ENCODE measurements at regions of chr18 and their contacts with region 1.

Region 1: GRCh38 chr18:74040459-74041332 is 106.9 kb downstream of the FBXO15 start:
- DNase-seq: peak; percentile 37 to 87 (median 66)
- ATAC-seq: peak; percentile 85 to 96 (median 94)
- H3K4me3 ChIP-seq: no peak overlapping the region
- H3K27ac ChIP-seq: no peak overlapping the region
- H3K4me1 ChIP-seq: no peaks in the 10 kb centered on the region
- H3K27me3 ChIP-seq: no peaks in the 10 kb centered on the region
- CTCF ChIP-seq: peak; percentile 45 to 60 (median 55)

Region 2: GRCh38 chr18:73791081-73791480 is 249.6 kb before region 1 on chr18:
- intact Hi-C with region 1: no loop called
- DNase-seq: no peak
- ATAC-seq: no peak
- H3K4me3 ChIP-seq: no peak overlapping the region
- H3K27ac ChIP-seq: no peak overlapping the region
- H3K4me1 ChIP-seq: no peaks in the 10 kb centered on the region
- H3K27me3 ChIP-seq: no peaks in the 10 kb centered on the region
- CTCF ChIP-seq: no peak

Region 3: GRCh38 chr18:73990258-73990657 is 50.4 kb before region 1 on chr18:
- intact Hi-C with region 1: no loop called
- DNase-seq: no peak
- ATAC-seq: no peak
- H3K4me3 ChIP-seq: no peak overlapping the region
- H3K27ac ChIP-seq: no peak overlapping the region
- H3K4me1 ChIP-seq: no peaks in the 10 kb centered on the region
- H3K27me3 ChIP-seq: no peaks in the 10 kb centered on the region
- CTCF ChIP-seq: no peak

Region 4: DNA sequence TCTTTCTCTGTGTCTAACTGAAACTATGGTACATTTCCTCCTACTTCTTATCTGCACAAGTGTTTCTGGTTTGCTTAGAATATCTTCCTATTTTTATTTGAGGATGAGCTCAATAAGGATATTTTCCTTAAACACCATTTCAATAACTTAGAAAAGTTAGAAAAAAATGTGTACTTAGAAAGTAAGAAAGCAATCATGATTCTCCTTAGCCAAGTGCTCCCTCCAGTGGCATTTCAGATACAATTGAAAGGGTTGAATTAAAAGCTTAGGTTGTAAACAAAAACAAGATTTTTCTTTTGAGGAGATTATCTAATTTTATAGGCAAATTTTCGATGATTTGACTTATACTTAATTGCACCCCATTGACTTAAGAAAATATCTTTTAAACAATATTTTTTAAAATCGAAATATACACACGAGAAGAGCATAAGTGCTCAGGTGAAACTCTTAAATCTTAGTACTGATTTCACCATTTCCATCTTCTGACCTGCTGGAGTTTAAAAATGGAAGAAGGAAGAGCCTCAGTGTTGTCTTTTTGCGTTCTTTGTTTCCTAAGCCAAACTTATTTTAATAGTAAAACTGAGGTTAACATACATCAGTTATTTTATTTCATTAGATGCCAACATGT is 301.8 kb after region 1 on chr18:
- intact Hi-C with region 1: loop called in 1 of 3 experiments (anchors 5 kb)
- DNase-seq: peak in 3 of 6 donors; percentile 20 to 41 (median 27)
- ATAC-seq: peak; percentile 61 to 83 (median 77)
- H3K4me3 ChIP-seq: no peak overlapping the region
- H3K27ac ChIP-seq: no peak overlapping the region
- H3K4me1 ChIP-seq: no peaks in the 10 kb centered on the region
- H3K27me3 ChIP-seq: no peaks in the 10 kb centered on the region
- CTCF ChIP-seq: peak in 3 of 4 donors; percentile 35 to 66 (median 50)

Measured in pancreas (tissue), 10 donors.